ENCODE measurements at regions of chr5 and their contacts with region 1.

Region 1: DNA sequence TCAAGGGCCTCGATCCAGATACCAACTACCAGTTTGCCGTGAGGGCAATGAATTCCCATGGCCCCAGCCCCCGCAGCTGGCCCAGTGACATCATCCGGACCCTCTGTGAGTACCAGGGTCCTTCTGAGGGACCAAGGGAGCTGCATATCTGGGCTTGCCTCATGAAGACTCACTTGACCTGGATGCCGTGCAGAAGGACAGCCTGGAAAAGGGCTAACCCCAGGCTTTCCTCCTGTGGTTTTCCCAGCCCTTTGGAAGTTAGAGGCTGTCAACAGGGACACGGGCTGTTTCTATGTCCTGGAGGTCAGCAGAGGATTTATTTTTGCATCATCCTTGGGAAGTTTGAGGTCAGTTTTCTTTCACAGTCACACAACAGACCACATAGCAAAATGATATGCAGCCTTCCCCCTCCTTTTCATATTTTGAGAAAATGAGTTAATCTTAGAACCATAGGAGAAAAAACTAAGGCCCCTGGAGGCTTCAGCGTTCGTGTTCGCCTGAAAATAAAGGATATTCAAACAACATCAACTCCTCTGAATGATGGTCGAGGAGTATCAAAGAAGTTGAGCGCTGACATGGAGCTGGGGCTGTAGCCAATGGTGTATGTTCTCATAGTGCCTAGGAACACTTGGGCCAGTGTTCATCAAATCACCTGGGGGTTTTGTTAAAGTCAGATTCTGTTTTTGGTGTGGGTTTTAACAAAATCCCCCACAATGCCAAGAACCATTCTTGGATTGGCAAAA is 112.2 kb downstream of the EGFLAM start:
- DNase-seq: no peak
- CTCF ChIP-seq: no peak

Region 2: GRCh38 chr5:38382898-38383297 is 12.4 kb after region 1 on chr5:
- CTCF ChIA-PET with region 1: interaction called, 27 read pairs
- POLR2A ChIA-PET with region 1: no interaction called
- DNase-seq: peak; percentile 59
- CTCF ChIP-seq: peak; percentile 71

Region 3: GRCh38 chr5:38396766-38397165 is 26.2 kb after region 1 on chr5:
- CTCF ChIA-PET with region 1: no interaction called
- POLR2A ChIA-PET with region 1: no interaction called
- DNase-seq: no peak
- CTCF ChIP-seq: no peak